ENCODE measurements at regions of chr11 and their contacts with region 1.

Region 1: GRCh38 chr11:93234602-93235207 is 36.9 kb upstream of the SLC36A4 start:
- DNase-seq: peak; percentile 64
- H3K4me3 ChIP-seq: no peak overlapping the region
- H3K27ac ChIP-seq: no peak overlapping the region
- H3K4me1 ChIP-seq: peaks cover 7% of the 10 kb centered on the region
- H3K27me3 ChIP-seq: no peaks in the 10 kb centered on the region
- CTCF ChIP-seq: peak; percentile 96

Region 2: GRCh38 chr11:93131709-93132108 is 103.0 kb before region 1 on chr11:
- intact Hi-C with region 1: no loop called
- DNase-seq: no peak
- H3K4me3 ChIP-seq: no peak overlapping the region
- H3K27ac ChIP-seq: no peak overlapping the region
- H3K4me1 ChIP-seq: no peaks in the 10 kb centered on the region
- H3K27me3 ChIP-seq: peaks cover 28% of the 10 kb centered on the region
- CTCF ChIP-seq: peak; percentile 13

Region 3: DNA sequence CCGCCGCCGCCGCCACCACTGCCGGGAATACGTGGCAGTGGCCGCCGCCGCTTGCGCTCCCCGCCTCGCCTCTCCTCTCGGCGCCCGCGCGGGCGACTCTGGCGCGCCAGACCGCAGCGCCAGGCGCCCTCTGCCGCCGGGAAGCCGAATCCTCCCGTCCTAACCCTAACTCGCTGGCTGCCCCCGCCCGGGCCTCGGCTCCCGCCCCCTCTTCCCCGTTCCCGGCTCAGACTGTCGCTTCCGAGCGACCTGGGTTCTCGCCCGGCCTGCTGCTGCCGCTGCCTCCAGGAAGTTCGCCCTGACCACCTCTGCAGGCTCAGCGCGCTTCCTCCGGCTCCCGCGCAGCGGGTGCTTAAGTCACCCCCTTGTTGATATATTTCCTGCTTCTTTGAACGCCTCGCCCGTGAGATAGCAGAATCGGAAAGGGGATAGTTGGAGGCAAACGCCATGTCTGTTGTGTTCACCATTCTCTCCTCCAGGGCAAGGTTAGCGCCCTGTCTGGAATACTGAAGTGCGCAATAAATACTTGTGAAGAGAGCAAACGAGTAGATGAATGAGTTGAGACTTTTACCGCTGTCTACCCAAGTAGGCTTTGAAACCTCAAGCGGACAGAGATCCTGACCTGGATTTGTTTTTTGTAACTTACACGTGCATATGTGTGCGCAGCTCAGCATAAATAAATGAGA is 308.7 kb after region 1 on chr11 and contains the start of gene SMCO4:
- intact Hi-C with region 1: loop called (anchors 10 kb)
- DNase-seq: peak; percentile 89
- H3K4me3 ChIP-seq: peak within 1 kb of the TSS; percentile 94
- H3K27ac ChIP-seq: peak within 1 kb of the TSS; percentile 92
- H3K4me1 ChIP-seq: peaks cover 52% of the 10 kb centered on the region
- H3K27me3 ChIP-seq: no peaks in the 10 kb centered on the region
- CTCF ChIP-seq: peak; percentile 86
- total RNA-seq, gene SMCO4: 57.6 TPM